CD4-positive, alpha-beta T cell (primary cell): ENCODE measurements at regions of chr3 and their contacts with region 1.

Region 1: GRCh38 chr3:19946832-19947548 is at the start of gene RAB5A:
- DNase-seq: peak; percentile 91 to 99 (median 96)
- ATAC-seq: peak; percentile 74
- H3K4me3 ChIP-seq: peak within 1 kb of the TSS; percentile 97
- H3K4me3 Mint-ChIP-seq: peak within 1 kb of the TSS; percentile 100
- H3K27ac ChIP-seq: peak within 1 kb of the TSS; percentile 94 to 98
- H3K27ac Mint-ChIP-seq: peak within 1 kb of the TSS; percentile 97
- H3K4me1 ChIP-seq: peaks cover 34% of the 10 kb centered on the region
- H3K4me1 Mint-ChIP-seq: peaks cover 60% of the 10 kb centered on the region
- H3K27me3 ChIP-seq: no peaks in the 10 kb centered on the region
- H3K27me3 Mint-ChIP-seq: no peaks in the 10 kb centered on the region
- CTCF ChIP-seq: no peak
- total RNA-seq, gene RAB5A: 120 to 125 TPM

Region 2: GRCh38 chr3:19146685-19147650 is 800.0 kb before region 1 on chr3:
- CTCF ChIA-PET with region 1: no interaction called
- POLR2A ChIA-PET with region 1: no interaction called
- intact Hi-C with region 1: loop called in 1 of 2 experiments (anchors 10 kb)
- DNase-seq: peak; percentile 21 to 70 (median 50)
- ATAC-seq: peak; percentile 76
- H3K4me3 ChIP-seq: peak overlapping the region; percentile 71
- H3K4me3 Mint-ChIP-seq: peak overlapping the region; percentile 94
- H3K27ac ChIP-seq: peak overlapping the region in 1 of 2 donors; percentile 13
- H3K27ac Mint-ChIP-seq: peak overlapping the region; percentile 78
- H3K4me1 ChIP-seq: peaks cover 23% of the 10 kb centered on the region
- H3K4me1 Mint-ChIP-seq: peaks cover 25% of the 10 kb centered on the region
- H3K27me3 ChIP-seq: peaks cover 21 to 36% of the 10 kb centered on the region in 2 experiments
- H3K27me3 Mint-ChIP-seq: peaks cover 52% of the 10 kb centered on the region
- CTCF ChIP-seq: peak; percentile 48

Region 3: DNA sequence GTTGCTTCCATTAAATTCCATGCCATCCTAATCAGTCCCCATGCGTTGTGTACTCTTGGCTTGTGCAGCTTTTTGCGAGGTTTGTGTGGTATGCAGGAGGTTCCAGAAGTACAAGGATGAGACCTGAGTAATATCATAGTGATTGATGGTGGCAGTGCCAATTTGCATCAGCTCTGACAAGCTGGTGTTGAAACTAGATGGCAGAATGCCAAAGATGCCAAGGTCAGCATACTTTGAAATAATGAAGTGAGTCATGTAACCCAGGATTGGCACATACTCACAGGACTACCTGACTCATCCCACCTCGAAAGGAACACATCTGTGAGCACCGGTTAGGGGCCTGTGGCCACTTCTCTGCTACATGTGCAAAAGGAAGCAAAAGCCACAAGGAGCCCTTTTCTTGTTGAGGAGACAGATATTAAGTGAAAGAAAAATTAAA is 107.6 kb after region 1 on chr3:
- CTCF ChIA-PET with region 1: no interaction called
- POLR2A ChIA-PET with region 1: no interaction called
- intact Hi-C with region 1: loop called in 1 of 2 experiments (anchors 5 kb)
- DNase-seq: peak in 13 of 14 experiments; percentile 27 to 86 (median 56)
- ATAC-seq: peak; percentile 87
- H3K4me3 ChIP-seq: no peak overlapping the region
- H3K4me3 Mint-ChIP-seq: no peak overlapping the region
- H3K27ac ChIP-seq: peak overlapping the region; percentile 15 to 19
- H3K27ac Mint-ChIP-seq: no peak overlapping the region
- H3K4me1 ChIP-seq: peaks cover 68% of the 10 kb centered on the region
- H3K4me1 Mint-ChIP-seq: peaks cover 29% of the 10 kb centered on the region
- H3K27me3 ChIP-seq: no peaks in the 10 kb centered on the region
- H3K27me3 Mint-ChIP-seq: no peaks in the 10 kb centered on the region
- CTCF ChIP-seq: no peak

Region 4: DNA sequence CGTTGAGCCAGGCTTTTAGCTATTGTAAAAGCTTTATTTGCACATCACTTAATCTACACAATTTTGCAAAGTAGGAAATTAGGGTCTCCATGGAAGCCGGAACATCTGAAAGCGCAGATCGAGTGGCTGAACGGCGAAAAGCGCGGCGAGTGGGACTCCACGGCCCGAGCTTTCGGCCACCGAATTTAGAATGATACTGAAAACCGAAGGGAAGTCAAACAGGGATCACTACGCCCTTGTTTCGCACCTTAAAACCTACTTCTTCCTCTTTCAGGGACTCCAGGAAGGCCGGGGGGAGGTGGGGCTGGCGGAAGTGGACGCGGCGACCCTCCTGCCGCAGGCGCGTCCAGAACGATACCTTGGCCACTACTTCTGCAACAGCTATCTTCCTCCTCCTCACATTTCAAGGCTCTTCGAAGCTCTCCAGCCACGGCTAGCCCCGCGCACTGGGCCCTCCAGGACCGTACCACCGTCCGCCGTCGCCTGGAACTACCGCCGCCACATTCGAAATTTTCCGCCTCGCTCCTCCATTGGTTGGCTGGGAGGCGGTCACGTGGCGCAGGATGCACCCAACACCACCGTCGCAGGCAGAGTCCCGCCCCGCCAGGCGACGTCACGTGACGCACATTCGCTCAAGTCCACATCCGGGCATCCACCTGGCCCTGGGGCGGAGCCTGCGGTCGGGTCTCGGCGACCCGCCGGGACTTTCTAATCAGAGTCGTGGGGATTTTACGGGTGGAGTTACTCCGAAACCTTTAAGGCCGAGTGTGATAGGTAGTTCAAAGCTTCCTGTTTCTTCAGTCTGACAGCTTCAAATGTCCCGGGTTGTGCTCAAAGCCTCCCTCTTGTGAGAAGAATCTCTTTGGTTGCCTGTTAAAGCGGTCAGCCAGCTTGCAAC is 239.0 kb after region 1 on chr3 and contains the start of gene SGO1:
- CTCF ChIA-PET with region 1: no interaction called
- POLR2A ChIA-PET with region 1: interaction called, 11 read pairs
- intact Hi-C with region 1: loop called (anchors 1 to 2 kb)
- DNase-seq: peak; percentile 98 to 100 (median 100)
- ATAC-seq: peak; percentile 90
- H3K4me3 ChIP-seq: peak within 1 kb of the TSS; percentile 81
- H3K4me3 Mint-ChIP-seq: no peak within 1 kb of the TSS
- H3K27ac ChIP-seq: peak within 1 kb of the TSS; percentile 92 to 97
- H3K27ac Mint-ChIP-seq: no peak within 1 kb of the TSS
- H3K4me1 ChIP-seq: peaks cover 26% of the 10 kb centered on the region
- H3K4me1 Mint-ChIP-seq: no peaks in the 10 kb centered on the region
- H3K27me3 ChIP-seq: no peaks in the 10 kb centered on the region
- H3K27me3 Mint-ChIP-seq: no peaks in the 10 kb centered on the region
- CTCF ChIP-seq: no peak
- total RNA-seq, gene SGO1: not detected